Sigmoid colon (tissue), 7 donors: ENCODE measurements at regions of chr10 and their contacts with region 1.

Region 1: DNA sequence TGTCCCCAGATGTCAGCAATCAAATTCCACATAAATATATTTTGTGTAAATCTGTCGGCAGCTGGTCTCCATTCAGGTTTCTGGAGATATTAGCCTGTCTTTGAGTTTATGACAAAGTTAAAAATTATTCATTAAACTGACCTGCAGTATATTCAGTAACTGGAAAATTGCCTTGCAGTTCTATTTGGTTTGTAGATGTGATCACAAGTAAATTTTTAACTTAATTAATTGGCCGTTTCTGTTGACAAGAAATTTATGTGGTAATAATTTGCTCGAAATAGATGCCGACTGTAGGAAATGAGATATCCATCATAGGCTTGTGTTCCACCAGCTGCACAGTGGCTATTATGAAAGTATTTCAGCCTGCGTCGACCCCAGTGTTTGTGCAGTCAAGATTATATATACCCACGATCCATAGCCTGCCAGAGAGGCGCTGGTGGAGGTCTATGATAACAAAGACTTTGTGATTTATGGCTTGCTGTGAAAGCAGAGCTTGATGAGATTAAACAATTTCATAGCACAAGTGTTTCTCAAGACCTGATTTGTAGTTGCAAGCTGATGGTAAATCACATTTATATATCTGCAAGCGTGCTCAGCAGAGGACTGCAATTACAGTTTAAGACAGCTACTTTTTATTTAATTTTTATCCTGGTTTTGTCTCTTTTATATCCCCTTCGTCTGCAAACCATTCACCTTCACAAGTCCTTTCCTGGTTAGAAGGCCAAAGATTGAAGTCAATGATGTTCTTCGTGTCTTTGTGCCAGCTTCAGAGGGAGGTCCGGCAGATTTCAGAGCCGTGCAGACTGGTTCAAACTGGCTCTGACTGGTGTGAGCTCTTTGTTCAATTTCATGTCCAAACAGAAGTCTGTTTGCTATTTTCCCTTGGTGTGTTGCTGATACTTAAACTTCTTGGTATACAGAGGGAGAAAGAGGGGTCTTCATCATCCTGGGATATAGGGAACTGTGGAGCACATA is 850.9 kb downstream of the LRMDA start:
- DNase-seq: peak; percentile 84
- H3K4me3 ChIP-seq: no peak overlapping the region
- H3K27ac ChIP-seq: peak overlapping the region in 3 of 4 donors; percentile 44 to 59 (median 59)
- H3K4me1 ChIP-seq: peaks cover 0 to 55% (median 42%) of the 10 kb centered on the region in 4 donors
- H3K27me3 ChIP-seq: no peaks in the 10 kb centered on the region
- CTCF ChIP-seq: no peak
- EP300 ChIP-seq: peak in 2 of 4 donors; percentile 12 to 30
- POLR2A ChIP-seq: no peak

Region 2: GRCh38 chr10:76329891-76330575 is 47.7 kb after region 1 on chr10:
- intact Hi-C with region 1: loop called (anchors 5 kb)
- DNase-seq: no peak
- H3K4me3 ChIP-seq: no peak overlapping the region
- H3K27ac ChIP-seq: no peak overlapping the region
- H3K4me1 ChIP-seq: peaks cover 0 to 46% (median 43%) of the 10 kb centered on the region in 4 donors
- H3K27me3 ChIP-seq: no peaks in the 10 kb centered on the region
- CTCF ChIP-seq: no peak
- EP300 ChIP-seq: no peak
- POLR2A ChIP-seq: no peak

Region 3: DNA sequence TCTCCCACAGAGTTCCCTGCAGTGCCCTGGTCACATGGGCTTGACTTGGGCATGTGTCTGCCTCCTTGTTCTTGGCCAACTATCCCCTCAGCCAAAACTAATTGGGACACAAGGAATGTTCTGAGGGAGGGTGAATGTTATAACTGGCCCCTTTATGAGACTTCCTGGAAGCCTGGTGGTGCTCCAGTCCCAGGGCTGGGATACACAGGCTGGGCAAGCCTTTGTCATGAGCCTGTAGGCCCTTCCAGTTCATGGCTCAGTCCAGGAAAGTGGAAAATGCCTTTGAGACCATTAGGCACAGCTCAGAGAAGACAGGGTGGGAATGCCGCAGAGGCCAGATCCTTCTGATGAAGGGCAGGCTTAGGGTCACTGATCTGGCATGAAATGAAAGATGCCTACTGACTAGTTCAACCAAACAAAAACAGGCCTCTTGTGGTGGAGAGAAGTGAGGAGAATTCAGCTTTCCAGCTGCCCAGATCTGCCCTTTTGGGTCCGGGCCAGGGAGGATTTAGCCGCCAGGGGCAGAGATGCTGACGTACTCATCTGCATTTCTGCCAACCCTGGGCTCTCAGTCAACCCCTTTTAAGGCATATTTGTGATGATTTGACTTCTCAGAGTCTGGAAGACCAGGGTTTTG is 393.7 kb after region 1 on chr10:
- intact Hi-C with region 1: no loop called
- DNase-seq: peak; percentile 85
- H3K4me3 ChIP-seq: no peak overlapping the region
- H3K27ac ChIP-seq: peak overlapping the region; percentile 63 to 76 (median 70)
- H3K4me1 ChIP-seq: peaks cover 0 to 22% (median 17%) of the 10 kb centered on the region in 4 donors
- H3K27me3 ChIP-seq: no peaks in the 10 kb centered on the region
- CTCF ChIP-seq: no peak
- EP300 ChIP-seq: no peak
- POLR2A ChIP-seq: no peak